Body of pancreas (tissue), 4 donors: ENCODE measurements at regions of chr22 and their contacts with region 1.

Region 1: GRCh38 chr22:24189249-24190158 is 8.2 kb downstream of the SUSD2 start:
- DNase-seq: peak; percentile 75 to 84 (median 80)
- ATAC-seq: peak; percentile 90
- H3K4me3 ChIP-seq: no peak overlapping the region
- H3K27ac ChIP-seq: no peak overlapping the region
- H3K4me1 ChIP-seq: peaks cover 4% of the 10 kb centered on the region
- H3K27me3 ChIP-seq: no peaks in the 10 kb centered on the region
- CTCF ChIP-seq: peak; percentile 85 to 99 (median 95)
- POLR2A ChIP-seq: no peak

Region 2: GRCh38 chr22:24230911-24231656 is 41.6 kb after region 1 on chr22:
- intact Hi-C with region 1: loop called (anchors 5 kb)
- DNase-seq: peak; percentile 58 to 79 (median 67)
- ATAC-seq: peak; percentile 67
- H3K4me3 ChIP-seq: no peak overlapping the region
- H3K27ac ChIP-seq: no peak overlapping the region
- H3K4me1 ChIP-seq: no peaks in the 10 kb centered on the region
- H3K27me3 ChIP-seq: no peaks in the 10 kb centered on the region
- CTCF ChIP-seq: peak; percentile 17 to 55 (median 41)
- POLR2A ChIP-seq: no peak

Region 3: DNA sequence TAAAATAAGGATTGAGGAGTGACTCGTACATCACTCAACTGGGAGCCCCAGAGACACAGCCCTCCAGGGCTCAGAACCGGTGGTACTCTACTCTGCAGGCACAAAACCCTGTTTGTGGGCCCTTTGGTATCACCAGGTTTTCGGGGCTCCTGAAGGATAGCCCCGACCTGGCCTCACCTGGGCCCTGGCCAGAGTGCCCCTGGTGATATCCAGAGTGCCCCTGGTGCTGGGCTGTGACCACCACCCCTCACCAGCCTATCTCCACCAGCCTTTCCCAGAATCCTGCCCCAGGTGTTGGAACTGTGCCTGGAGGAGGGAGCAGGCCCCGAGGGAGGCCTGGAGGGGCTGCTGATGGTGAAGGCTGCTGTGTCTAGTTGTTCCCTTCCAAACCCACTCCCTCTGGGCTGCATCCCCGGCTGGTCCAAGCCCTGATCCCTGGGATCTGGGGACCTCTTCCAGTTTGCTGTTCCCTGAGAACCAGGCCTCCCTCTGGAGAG is 57.6 kb after region 1 on chr22:
- intact Hi-C with region 1: loop called (anchors 5 kb)
- DNase-seq: no peak
- ATAC-seq: no peak
- H3K4me3 ChIP-seq: no peak overlapping the region
- H3K27ac ChIP-seq: peak overlapping the region in 3 of 4 donors; percentile 32 to 62 (median 62)
- H3K4me1 ChIP-seq: peaks cover 15% of the 10 kb centered on the region
- H3K27me3 ChIP-seq: no peaks in the 10 kb centered on the region
- CTCF ChIP-seq: no peak
- POLR2A ChIP-seq: no peak